WTC11 (cell line): ENCODE measurements at regions of chr16 and their contacts with region 1.

Region 1: DNA sequence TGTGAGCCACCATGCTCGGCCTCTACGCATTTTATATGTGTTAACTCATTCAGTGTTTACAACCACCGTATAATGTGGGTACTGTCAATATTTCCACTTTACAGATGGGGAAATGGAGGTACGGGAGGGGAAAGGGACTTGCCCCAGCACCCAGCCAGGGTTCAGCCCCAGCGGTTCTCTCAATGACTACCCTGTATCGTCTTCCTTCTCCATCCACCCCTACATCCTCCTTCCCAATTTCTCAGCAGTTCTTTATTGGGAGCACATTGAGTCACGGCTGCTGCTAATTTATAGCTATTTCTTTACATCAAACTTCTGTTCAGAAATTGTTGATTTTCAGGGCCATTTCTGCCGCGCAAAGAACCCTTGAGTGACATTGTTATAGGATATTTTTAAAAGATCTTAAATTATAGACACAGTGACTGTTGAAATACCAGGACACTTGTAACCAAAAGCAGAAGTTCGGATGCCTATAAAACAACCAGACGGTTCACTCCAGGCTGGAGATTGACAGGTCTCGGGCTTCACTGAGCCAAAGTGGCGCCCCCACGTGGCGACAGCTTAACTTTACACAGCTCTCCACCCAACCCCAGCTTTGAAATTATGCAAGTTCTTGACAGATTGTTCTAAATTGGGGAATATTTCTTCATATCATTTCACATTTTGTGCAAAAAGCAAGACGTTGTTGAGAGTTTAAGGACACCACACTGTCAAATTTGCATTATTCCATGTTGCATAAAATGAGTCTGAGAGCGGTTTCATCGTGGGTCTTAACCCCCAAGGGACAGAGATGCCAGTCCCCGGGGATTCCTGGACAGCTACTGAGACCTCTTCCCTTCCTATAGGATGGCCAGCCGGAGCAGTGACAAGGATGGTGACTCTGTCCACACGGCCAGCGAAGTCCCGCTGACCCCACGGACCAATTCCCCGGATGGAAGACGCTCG is 11.8 kb downstream of the SYT17 start:
- DNase-seq: peak; percentile 63
- ATAC-seq: peak; percentile 63
- H3K4me3 Mint-ChIP-seq: no peak overlapping the region
- H3K27ac Mint-ChIP-seq: no peak overlapping the region
- H3K4me1 Mint-ChIP-seq: peaks cover 10% of the 10 kb centered on the region
- H3K27me3 Mint-ChIP-seq: no peaks in the 10 kb centered on the region
- CTCF ChIP-seq: peak; percentile 72

Region 2: DNA sequence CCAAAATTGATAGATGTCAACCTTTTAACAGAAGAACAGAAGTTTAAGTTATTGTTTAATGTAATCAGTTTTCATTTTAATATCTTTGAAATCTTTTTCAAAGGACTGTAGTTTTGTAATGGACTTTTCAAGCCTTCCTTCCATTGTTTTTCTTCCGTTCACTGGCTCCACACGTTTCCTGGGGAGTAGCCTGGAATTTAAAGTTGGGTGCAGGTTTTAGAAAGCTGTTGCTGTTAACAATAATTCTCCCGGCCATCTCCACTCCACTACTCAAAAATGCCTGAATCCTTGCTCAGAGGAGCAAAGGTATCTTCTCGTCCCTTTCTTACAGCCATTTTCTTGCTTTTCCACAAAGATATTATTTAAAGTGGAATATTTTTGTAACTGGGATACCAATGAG is 117.1 kb before region 1 on chr16:
- CTCF ChIA-PET with region 1: no interaction called
- POLR2A ChIA-PET with region 1: no interaction called
- DNase-seq: no peak
- ATAC-seq: no peak
- H3K4me3 Mint-ChIP-seq: no peak overlapping the region
- H3K27ac Mint-ChIP-seq: no peak overlapping the region
- H3K4me1 Mint-ChIP-seq: no peaks in the 10 kb centered on the region
- H3K27me3 Mint-ChIP-seq: peaks cover 2% of the 10 kb centered on the region; the same call in 1 of the 2 replicates
- CTCF ChIP-seq: no peak

Region 3: DNA sequence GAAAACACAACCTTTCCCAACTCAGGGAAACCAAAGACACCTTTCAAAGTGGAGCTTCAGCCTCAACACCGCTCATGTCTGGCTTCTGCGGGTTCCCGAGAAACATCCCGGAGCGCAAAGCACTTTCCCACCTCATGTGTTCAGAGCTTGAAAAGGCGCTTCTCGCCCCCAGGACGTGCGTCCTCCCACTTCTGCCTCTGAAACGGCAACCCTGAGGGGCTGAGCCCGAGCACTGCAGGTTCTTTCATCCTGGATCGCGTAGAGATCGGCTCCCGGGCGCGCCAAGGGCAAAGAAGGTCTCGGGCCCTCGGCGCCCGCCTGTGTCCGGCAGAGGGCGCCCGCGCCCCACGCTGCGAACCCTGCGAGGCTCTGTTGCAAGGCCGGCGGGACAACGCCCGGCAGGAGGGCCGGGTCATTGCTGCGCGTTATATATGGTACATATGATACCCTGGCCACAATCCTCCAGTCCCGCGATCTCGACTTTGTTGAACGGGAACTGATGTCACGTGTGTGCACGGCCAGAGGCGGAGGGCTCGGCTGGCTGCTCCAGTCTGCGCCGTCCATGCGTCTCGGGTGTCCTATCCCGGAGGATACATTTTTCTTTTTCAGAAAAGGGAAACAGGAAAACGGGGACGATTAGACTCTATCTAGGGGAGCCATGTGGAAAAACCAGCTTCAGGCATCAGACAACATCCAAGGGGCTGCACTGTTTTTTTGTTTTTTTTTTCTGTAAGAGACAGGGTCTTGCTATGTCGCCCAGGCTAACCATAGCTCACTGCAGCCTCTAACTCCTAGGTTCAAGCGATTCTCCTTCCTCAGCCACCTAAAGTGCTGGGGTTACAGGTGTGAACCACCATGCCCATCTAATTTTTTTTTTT is 93.3 kb before region 1 on chr16:
- CTCF ChIA-PET with region 1: interaction called, 43 read pairs
- POLR2A ChIA-PET with region 1: no interaction called
- DNase-seq: peak; percentile 89
- ATAC-seq: peak; percentile 94
- H3K4me3 Mint-ChIP-seq: peak overlapping the region; percentile 67
- H3K27ac Mint-ChIP-seq: no peak overlapping the region
- H3K4me1 Mint-ChIP-seq: peaks cover 4% of the 10 kb centered on the region; the same call in 1 of the 2 replicates
- H3K27me3 Mint-ChIP-seq: peaks cover 18% of the 10 kb centered on the region
- CTCF ChIP-seq: peak; percentile 87

Region 4: GRCh38 chr16:19094541-19095365 is 85.1 kb before region 1 on chr16:
- CTCF ChIA-PET with region 1: interaction called, 11 read pairs
- POLR2A ChIA-PET with region 1: no interaction called
- DNase-seq: no peak
- ATAC-seq: no peak
- H3K4me3 Mint-ChIP-seq: no peak overlapping the region
- H3K27ac Mint-ChIP-seq: no peak overlapping the region
- H3K4me1 Mint-ChIP-seq: peaks cover 11% of the 10 kb centered on the region; the same call in 1 of the 2 replicates
- H3K27me3 Mint-ChIP-seq: peaks cover 2% of the 10 kb centered on the region
- CTCF ChIP-seq: no peak

Region 5: DNA sequence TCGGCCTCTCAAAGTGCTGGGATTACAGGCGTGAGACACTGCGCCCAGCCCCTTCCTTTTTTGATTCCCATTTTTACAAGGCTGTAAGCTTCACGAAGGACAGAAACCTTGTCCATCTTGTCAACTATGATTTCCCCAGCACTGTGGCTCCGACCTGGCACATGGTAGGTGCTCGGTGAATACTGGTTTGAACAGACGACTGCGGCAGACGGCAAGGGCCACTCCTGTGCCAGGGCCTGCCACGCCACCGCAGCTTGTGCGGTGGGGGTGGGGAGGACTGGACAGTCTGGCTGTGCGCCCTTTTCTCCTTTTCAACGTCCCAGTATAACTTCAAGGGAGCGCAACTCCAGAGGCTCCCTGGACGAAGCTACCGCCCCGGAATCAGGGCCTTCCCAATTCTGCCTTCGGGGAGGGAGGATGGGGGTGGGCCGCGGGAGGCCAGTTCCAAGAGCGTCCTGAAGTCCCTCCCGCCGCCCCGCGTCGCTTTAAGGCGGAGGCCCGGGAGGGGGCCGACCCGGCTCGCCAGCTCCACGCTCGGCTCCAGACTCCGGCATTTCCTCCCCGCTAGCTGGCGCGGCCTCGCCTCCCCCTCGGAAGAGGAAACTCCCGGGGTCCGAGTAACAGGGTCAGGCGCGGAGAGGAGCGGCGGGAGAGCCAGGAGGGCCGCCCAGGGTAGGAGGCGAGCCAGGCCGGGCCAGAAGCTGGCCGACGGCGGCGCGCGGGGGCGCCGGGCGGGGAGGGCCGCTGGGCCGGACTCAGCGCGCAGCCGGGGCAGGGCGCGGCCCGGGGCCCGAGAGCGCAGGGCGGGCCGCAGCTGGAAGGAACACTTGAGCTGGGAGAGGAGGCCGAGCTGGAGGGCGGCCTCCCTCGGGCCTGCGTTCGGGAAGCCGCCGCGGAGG is 66.1 kb before region 1 on chr16 and contains the start of gene ITPRIPL2:
- CTCF ChIA-PET with region 1: interaction called, 20 read pairs
- POLR2A ChIA-PET with region 1: no interaction called
- DNase-seq: peak; percentile 58
- ATAC-seq: peak; percentile 56
- H3K4me3 Mint-ChIP-seq: peak within 1 kb of the TSS; percentile 60
- H3K27ac Mint-ChIP-seq: no peak within 1 kb of the TSS
- H3K4me1 Mint-ChIP-seq: peaks cover 21% of the 10 kb centered on the region
- H3K27me3 Mint-ChIP-seq: peaks cover 55% of the 10 kb centered on the region
- CTCF ChIP-seq: no peak
- total RNA-seq, gene ITPRIPL2: 5.3 to 7.1 TPM (median 6.6 TPM) in 3 replicates

Region 6: DNA sequence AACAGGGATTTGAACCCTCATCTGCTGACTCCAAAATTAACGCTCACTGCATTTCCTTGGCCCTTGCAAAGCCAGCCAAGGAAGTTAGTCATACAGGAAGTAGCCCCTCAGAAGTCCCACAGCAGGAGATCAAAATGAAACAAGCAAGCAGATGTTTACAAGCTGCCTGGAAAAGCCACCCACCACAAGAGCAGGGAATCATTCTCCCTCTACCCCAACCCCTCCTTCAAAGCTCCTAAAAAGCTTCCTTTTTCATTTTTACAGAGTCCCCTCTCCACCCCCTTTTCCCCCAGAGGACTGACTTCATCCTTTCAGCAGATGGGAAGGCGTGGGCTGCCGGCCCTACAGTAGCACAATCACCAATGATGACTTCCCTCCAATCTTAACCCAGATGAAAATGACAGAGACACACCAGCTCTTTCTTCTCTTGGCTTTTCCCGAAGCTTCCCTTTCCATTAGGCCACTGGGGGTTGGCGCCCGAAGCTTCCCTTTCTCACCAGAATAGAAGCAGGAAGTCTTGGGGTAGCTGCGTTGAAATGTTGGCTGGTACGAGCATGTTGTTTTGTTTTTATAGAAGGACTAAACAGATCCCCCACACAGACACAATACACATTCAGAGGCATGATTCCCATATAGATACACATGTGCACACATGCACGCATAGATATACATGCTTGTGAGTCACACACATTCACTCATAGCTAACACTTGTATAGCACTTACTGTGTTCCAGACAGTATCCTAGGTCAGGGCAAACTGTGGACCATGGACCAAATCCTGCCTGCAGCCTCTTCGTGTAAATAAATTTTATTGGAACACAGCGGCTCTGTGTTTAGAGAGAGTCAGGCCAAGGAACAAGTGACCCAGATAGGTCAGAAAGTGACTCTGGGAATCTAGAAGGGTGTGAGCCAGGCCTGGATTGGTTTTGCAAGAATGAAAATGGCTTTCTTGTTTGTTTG is 48.7 kb before region 1 on chr16:
- CTCF ChIA-PET with region 1: interaction called, 10 read pairs
- POLR2A ChIA-PET with region 1: no interaction called
- DNase-seq: no peak
- ATAC-seq: peak; percentile 66
- H3K4me3 Mint-ChIP-seq: no peak overlapping the region
- H3K27ac Mint-ChIP-seq: peak overlapping the region; percentile 39
- H3K4me1 Mint-ChIP-seq: peaks cover 44% of the 10 kb centered on the region
- H3K27me3 Mint-ChIP-seq: peaks cover 3% of the 10 kb centered on the region; the same call in 1 of the 2 replicates
- CTCF ChIP-seq: no peak

Region 7: DNA sequence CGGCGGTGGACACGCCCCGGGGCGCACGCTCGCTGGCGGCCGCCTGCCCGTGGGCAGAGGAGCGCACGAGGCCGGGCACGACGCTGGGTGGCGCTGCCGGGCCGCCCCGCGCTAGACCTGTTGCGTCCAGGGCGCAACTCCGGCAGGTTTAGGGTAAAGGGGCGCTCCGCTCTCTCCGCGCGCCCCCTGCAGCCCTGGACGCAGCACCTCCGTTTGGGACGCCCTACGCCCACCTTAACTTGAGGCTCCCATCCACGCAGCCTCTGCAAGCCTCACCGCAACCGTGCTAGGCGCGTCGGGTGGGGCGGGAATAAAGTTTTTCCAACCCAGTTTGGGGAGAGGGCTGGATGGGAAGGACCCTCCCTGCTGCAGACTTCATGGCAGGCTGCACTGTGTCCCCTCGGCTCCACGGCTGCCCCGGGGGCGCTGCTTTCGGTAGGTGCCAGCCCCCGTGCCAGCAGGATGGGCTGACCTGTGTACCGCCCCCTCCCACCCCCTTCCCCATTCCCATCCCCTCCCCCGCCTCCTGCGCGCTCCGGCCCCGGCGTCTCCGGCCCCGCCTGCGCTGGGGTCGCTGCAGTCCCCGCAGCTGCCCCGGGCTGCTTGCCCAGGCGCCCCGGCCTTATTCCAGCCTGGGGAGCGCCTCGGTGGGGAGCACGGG is 12.0 kb before region 1 on chr16 and contains the start of gene SYT17:
- CTCF ChIA-PET with region 1: interaction called, 40 read pairs
- POLR2A ChIA-PET with region 1: no interaction called
- DNase-seq: peak; percentile 81
- ATAC-seq: peak; percentile 92
- H3K4me3 Mint-ChIP-seq: peak within 1 kb of the TSS; percentile 72
- H3K27ac Mint-ChIP-seq: no peak within 1 kb of the TSS
- H3K4me1 Mint-ChIP-seq: peaks cover 7% of the 10 kb centered on the region
- H3K27me3 Mint-ChIP-seq: peaks cover 19% of the 10 kb centered on the region
- CTCF ChIP-seq: peak; percentile 71; the same call in 1 of the 2 replicates
- total RNA-seq, gene SYT17: 5.5 to 6.8 TPM (median 6.3 TPM) in 3 replicates

Region 8: DNA sequence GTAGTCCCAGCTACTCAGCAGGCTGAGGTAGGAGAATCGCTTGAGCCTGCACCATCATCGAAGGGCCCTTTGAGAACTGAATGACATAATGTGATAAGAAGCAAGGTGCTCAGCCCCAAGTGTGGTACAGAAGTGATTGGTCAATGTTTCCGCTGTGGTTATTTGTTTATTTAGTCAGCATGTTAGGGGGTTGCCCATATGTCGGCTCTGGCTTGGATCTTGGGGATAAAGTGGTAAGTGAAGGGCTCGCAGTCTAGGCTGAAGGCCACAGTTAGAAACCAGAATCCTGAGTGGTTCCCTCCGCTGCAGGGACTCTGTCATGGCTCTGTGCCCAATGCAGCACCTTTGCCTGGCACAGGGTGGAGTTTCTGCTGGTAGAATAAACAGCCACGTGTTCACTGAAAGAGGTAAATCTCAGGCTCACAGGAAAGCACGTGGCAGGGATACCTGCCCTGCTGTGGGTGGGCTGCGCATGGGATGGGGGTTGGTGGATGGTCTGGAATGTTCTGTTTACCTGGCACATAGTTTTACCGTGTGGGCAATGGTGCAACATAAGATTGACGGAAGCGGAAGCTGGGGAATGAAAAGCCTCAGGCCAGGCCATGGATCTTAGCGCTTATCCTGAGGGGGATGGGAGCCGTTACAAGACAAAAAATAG is 23.7 kb after region 1 on chr16:
- CTCF ChIA-PET with region 1: interaction called, 13 read pairs
- POLR2A ChIA-PET with region 1: no interaction called
- DNase-seq: no peak
- ATAC-seq: no peak
- H3K4me3 Mint-ChIP-seq: no peak overlapping the region
- H3K27ac Mint-ChIP-seq: no peak overlapping the region
- H3K4me1 Mint-ChIP-seq: peaks cover 5% of the 10 kb centered on the region
- H3K27me3 Mint-ChIP-seq: no peaks in the 10 kb centered on the region
- CTCF ChIP-seq: no peak

Region 9: DNA sequence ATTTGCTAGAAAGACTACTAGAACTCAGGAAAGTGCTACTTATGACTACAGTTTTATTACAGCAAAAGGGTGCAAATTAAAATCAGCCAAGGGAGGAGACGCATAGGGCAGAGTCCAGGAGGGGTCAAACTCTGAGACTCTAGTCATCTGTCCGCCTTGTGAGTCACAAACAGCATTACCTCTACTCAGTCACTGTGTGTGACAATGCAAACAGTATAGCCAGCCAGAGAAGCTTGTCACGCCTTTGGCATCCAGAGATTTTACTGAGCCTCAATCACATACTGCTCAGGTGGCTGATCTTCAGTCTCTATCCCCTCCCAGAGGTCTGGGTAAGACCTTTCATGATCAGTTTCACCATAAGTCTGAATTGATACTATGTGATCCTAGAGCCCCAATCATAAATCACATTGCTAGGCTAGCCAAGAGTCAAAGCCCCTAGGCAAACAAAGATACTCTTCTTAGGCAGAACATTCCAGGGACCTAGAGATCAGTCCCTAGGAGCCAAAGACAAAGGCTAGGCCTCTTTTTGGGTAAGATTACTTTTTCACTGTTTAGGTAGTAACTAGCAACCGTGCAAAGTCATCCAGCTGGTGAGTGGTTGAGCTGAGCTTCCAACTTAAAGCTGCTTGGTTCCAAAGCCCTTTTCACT is 56.9 kb after region 1 on chr16:
- CTCF ChIA-PET with region 1: no interaction called
- POLR2A ChIA-PET with region 1: no interaction called
- DNase-seq: no peak
- ATAC-seq: no peak
- H3K4me3 Mint-ChIP-seq: no peak overlapping the region
- H3K27ac Mint-ChIP-seq: no peak overlapping the region
- H3K4me1 Mint-ChIP-seq: peaks cover 3% of the 10 kb centered on the region; the same call in 1 of the 2 replicates
- H3K27me3 Mint-ChIP-seq: peaks cover 2% of the 10 kb centered on the region; the same call in 1 of the 2 replicates
- CTCF ChIP-seq: no peak